Heart left ventricle (tissue), 16 donors: ENCODE measurements at regions of chr7 and their contacts with region 1.

Region 1: DNA sequence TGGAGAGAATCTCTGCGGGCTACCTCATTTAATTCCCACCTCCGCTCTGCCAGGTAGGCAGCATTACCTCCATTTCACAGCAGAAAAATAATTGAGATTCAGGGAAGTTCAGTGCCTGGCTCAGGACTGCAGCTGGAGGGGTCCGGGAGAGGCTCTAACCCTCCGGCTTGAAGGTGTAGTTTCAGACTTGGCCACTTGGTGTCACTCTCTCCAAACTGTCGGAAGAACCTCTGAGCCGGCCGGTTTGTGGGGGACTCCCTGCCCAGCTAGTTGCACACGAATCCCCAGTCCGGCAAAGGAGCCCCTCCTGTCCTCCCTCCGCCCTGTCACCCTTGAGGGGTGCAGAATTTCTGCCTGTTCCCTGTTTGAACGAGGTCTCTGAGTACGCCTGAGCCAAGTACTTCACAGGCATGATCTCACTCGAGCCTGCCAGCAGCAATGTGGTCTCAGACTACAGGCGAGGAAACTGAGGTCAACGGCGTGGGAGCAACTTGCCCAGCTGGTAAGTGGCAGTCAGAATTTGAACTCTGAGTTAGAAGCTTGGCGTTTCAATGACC is 144.7 kb upstream of the ZNF716 start:
- DNase-seq: no peak
- ATAC-seq: peak; percentile 52 to 65 (median 56)
- H3K4me3 ChIP-seq: no peak overlapping the region
- H3K27ac ChIP-seq: no peak overlapping the region
- H3K4me1 ChIP-seq: no peaks in the 10 kb centered on the region
- H3K27me3 ChIP-seq: no peaks in the 10 kb centered on the region
- CTCF ChIP-seq: peak; percentile 19 to 62 (median 49)
- POLR2A ChIP-seq: no peak

Region 2: GRCh38 chr7:57364933-57365710 is 59.9 kb after region 1 on chr7:
- intact Hi-C with region 1: loop called in 1 of 10 experiments (anchors 10 kb)
- DNase-seq: no peak
- ATAC-seq: peak in 1 of 4 donors; percentile 8
- H3K4me3 ChIP-seq: no peak overlapping the region
- H3K27ac ChIP-seq: no peak overlapping the region
- H3K4me1 ChIP-seq: peaks cover 0 to 8% (median 0%) of the 10 kb centered on the region in 12 donors
- H3K27me3 ChIP-seq: no peaks in the 10 kb centered on the region
- CTCF ChIP-seq: no peak
- POLR2A ChIP-seq: no peak

Region 3: DNA sequence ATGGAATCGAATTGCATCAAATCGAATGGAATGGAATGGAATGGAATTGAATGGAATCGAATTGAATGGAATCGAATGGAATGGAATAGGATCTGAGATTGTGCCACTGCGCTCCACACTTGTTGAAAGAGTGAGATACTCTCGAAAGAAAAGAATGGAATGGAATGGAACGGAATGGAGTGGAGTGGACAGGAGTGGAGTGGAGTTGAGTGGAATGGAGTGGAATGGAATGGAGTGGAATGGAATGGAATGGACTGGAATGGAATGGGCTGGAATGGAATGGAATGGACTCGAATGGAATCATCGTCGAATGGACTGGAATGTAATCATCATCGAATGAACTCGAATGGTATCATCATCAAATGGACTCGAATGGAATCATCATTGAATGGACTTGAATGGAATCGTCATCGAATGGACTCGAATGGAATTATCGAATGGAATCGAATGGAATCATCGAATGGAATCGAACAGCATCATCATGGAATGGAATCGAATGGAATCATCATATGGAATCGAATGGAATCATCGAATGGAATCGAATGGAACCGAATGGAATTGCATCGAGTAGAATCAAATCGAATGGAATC is 182.8 kb after region 1 on chr7:
- intact Hi-C with region 1: loop called in 4 of 10 experiments (anchors 5 kb)
- DNase-seq: no peak
- ATAC-seq: no peak
- H3K4me3 ChIP-seq: no peak overlapping the region
- H3K27ac ChIP-seq: no peak overlapping the region
- H3K4me1 ChIP-seq: no peaks in the 10 kb centered on the region
- H3K27me3 ChIP-seq: no peaks in the 10 kb centered on the region
- CTCF ChIP-seq: no peak
- POLR2A ChIP-seq: no peak

Region 4: GRCh38 chr7:57789130-57789529 is 483.9 kb after region 1 on chr7:
- intact Hi-C with region 1: no loop called
- DNase-seq: no peak
- ATAC-seq: no peak
- H3K4me3 ChIP-seq: no peak overlapping the region
- H3K27ac ChIP-seq: no peak overlapping the region
- H3K4me1 ChIP-seq: no peaks in the 10 kb centered on the region
- H3K27me3 ChIP-seq: no peaks in the 10 kb centered on the region
- CTCF ChIP-seq: no peak
- POLR2A ChIP-seq: no peak